Dorsolateral prefrontal cortex (tissue), 120 donors: ENCODE measurements at regions of chr6 and their contacts with region 1.

Region 1: GRCh38 chr6:26285143-26286134 is 79.6 kb upstream of the BTN3A2 start:
- DNase-seq: peak; percentile 90 to 97 (median 96)
- H3K4me3 ChIP-seq: peak overlapping the region; percentile 54 to 99 (median 80)
- H3K27ac ChIP-seq: peak overlapping the region; percentile 51 to 96 (median 90)
- H3K27me3 ChIP-seq: no peaks in the 10 kb centered on the region
- CTCF ChIP-seq: peak in 3 of 56 donors; percentile 8 to 15 (median 14)

Region 2: DNA sequence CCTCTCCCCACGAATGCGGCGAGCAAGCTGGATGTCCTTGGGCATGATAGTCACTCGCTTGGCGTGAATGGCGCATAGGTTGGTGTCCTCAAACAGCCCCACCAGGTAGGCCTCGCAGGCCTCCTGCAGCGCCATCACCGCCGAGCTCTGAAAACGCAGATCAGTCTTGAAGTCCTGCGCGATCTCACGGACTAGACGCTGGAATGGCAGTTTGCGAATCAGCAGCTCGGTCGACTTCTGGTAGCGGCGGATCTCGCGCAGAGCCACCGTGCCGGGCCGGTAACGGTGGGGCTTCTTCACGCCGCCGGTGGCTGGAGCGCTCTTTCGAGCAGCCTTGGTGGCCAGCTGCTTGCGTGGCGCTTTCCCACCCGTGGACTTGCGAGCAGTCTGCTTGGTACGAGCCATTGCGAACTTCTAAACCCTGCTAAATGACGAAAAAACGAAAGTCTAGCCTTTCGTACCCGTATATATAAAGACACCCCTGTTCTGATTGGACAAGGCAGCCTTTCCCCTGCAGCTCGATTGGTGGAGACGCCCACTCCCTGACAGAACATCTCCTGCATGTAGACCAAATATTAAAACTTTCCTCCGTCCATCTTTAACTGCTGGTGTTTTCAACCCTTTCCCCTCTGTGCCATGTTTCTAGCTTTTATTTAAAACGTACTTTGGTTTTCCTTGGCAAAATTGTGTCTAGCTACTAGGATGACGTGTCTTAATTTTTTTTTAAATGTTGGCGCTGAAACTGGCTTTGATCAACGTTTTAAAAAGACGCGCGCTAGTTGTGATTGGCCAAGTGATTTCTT is 88.4 kb before region 1 on chr6:
- intact Hi-C with region 1: loop called in 1 of 2 experiments (anchors 5 kb)
- DNase-seq: peak in 9 of 10 donors; percentile 61 to 85 (median 80)
- H3K4me3 ChIP-seq: peak overlapping the region; percentile 52 to 86 (median 74)
- H3K27ac ChIP-seq: peak overlapping the region in 57 of 59 donors; percentile 21 to 93 (median 80)
- H3K27me3 ChIP-seq: peaks cover 0 to 18% (median 0%) of the 10 kb centered on the region in 45 donors
- CTCF ChIP-seq: peak in 7 of 56 donors; percentile 4 to 26 (median 19)

Region 3: DNA sequence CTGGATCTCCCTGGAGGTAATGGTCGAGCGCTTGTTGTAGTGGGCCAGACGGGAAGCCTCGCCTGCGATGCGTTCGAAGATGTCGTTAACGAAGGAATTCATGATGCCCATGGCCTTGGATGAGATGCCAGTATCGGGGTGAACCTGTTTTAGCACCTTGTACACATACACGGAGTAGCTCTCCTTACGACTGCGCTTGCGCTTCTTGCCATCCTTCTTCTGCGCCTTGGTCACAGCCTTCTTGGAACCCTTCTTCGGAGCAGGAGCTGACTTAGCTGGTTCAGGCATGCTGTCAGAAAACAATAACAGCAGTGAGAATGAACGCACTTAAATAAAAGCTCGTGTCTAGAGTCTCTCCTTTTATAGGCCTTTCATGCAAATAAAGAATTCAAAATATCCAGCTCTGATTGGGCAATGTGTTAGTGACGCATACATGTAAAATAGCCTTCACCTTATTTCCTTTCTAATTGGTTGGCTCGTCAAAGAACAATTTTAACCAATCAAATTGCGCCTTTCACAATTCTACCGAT is 69.0 kb before region 1 on chr6:
- intact Hi-C with region 1: loop called in 1 of 2 experiments (anchors 5 kb)
- DNase-seq: peak in 5 of 10 donors; percentile 66 to 77 (median 69)
- H3K4me3 ChIP-seq: peak overlapping the region; percentile 36 to 81 (median 66)
- H3K27ac ChIP-seq: peak overlapping the region in 57 of 59 donors; percentile 64 to 98 (median 91)
- H3K27me3 ChIP-seq: peaks cover 0 to 67% (median 16%) of the 10 kb centered on the region in 45 donors
- CTCF ChIP-seq: no peak

Region 4: DNA sequence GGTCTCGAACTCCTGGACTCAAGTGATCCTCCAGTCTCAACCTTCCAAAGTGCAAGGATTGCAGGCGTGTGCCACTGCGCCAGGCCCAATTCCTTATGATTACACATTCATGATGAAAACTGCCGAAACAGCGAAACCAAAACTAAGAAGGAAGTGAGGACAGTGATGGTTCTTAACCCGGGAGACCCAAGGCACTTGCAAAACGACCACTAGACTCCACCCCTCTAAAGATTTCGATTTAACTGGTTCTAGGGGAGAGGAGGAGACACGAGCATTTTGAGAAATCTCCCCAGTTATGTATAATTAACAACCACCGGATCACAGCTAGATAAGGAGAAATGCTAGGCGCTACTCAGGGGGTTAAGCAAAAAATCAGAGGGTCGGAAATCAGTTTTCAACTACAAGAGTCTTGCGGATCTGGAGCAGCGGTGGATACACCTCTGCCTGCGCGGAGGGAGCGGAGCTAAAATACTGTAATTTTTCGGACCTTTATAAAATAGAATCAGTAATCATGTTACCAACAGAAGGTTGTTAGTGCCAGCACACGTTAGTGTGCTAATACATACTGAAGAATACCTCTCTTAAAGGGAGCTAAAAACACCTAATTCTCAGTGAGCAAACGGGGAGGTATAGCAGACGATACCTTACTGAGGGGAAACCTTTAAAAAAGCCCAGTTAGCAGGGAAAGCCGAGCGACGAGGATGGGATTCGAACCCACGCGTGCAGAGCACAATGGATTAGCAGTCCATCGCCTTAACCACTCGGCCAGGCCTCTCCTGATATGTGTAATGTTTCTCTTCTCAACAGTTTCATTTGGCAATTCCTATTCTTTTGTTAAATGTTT is 19.6 kb after region 1 on chr6:
- intact Hi-C with region 1: loop called in 1 of 2 experiments (anchors 2 kb)
- DNase-seq: peak in 5 of 10 donors; percentile 42 to 72 (median 57)
- H3K4me3 ChIP-seq: peak overlapping the region in 57 of 59 donors; percentile 4 to 80 (median 51)
- H3K27ac ChIP-seq: peak overlapping the region in 47 of 59 donors; percentile 9 to 90 (median 72)
- H3K27me3 ChIP-seq: no peaks in the 10 kb centered on the region
- CTCF ChIP-seq: peak in 3 of 56 donors; percentile 12 to 30 (median 12)

Region 5: GRCh38 chr6:26532699-26533531 is 247.5 kb after region 1 on chr6:
- intact Hi-C with region 1: no loop called
- DNase-seq: peak; percentile 81 to 96 (median 90)
- H3K4me3 ChIP-seq: peak overlapping the region; percentile 37 to 89 (median 75)
- H3K27ac ChIP-seq: peak overlapping the region; percentile 6 to 92 (median 82)
- H3K27me3 ChIP-seq: no peaks in the 10 kb centered on the region
- CTCF ChIP-seq: peak in 14 of 56 donors; percentile 8 to 51 (median 14)